ENCODE measurements at regions of chr1 and their contacts with region 1.

Region 1: DNA sequence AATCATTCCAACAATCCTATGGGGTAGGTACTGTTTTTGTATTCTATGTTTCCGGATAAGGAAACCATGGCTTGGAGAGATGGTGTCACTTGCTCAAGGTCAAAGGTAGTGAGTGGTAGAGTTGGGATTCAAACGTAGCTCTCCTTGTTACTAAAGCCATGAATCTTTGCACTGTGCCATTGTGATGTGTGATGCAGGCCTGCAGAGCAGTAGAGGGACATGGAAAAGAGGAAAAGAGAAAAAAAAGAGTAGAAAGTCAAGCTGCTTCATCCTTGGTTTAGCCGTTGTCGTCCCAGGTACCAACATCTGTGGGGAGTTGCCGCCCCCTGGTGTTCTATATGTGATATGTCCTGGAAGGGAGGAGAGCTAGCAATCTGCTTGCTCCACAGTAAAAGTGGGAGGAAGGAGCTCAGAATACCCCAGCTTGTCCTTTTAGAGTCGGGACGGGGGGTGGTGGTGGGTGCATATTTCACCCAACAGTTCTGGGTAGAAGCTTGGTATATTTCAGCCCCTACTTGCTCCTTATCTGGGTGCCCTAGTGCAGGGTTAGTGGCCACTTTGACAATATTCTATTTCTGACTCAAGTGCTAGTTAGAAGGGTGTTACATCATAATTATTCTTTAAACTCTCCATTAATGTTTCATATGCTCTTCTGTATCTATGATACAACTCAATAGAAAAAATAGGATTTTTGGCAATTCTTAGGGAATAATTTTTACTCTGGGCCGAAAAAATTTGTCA is 98.4 kb downstream of the EBNA1BP2 start:
- DNase-seq: peak; percentile 80
- H3K4me3 Mint-ChIP-seq: no peak overlapping the region
- H3K27ac Mint-ChIP-seq: no peak overlapping the region
- H3K4me1 Mint-ChIP-seq: peaks cover 4% of the 10 kb centered on the region
- H3K27me3 Mint-ChIP-seq: no peaks in the 10 kb centered on the region

Region 2: DNA sequence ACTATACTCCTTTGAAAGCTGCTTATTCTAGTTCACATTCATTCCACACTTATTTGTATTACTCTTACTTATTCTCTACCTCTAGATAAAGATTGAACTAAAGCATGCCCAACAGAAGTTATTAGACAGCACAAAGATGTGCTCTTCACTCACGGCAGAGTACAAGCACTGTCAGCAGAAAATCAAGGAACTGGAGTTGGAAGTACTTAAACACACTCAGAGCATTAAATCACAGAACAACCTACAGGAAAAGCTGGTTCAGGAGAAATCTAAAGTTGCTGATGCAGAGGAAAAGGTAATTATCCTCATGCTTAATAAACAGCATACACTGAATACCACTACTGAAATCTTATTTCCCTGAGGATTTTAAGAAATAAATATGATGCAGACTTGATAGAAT is 496.7 kb before region 1 on chr1:
- CTCF ChIA-PET with region 1: interaction called, 4 read pairs
- POLR2A ChIA-PET with region 1: no interaction called
- intact Hi-C with region 1: loop called (anchors 10 kb)
- DNase-seq: no peak
- H3K4me3 Mint-ChIP-seq: no peak overlapping the region
- H3K27ac Mint-ChIP-seq: no peak overlapping the region
- H3K4me1 Mint-ChIP-seq: no peaks in the 10 kb centered on the region
- H3K27me3 Mint-ChIP-seq: no peaks in the 10 kb centered on the region

Region 3: GRCh38 chr1:42846257-42847110 is 227.2 kb before region 1 on chr1 and contains the start of gene ZNF691:
- CTCF ChIA-PET with region 1: interaction called, 24 read pairs
- POLR2A ChIA-PET with region 1: interaction called, 4 read pairs
- intact Hi-C with region 1: no loop called
- DNase-seq: peak; percentile 94
- H3K4me3 Mint-ChIP-seq: peak within 1 kb of the TSS; percentile 89
- H3K27ac Mint-ChIP-seq: peak within 1 kb of the TSS; percentile 72
- H3K4me1 Mint-ChIP-seq: peaks cover 44% of the 10 kb centered on the region
- H3K27me3 Mint-ChIP-seq: no peaks in the 10 kb centered on the region
- total RNA-seq, gene ZNF691: 8.6 to 9.5 TPM

Region 4: DNA sequence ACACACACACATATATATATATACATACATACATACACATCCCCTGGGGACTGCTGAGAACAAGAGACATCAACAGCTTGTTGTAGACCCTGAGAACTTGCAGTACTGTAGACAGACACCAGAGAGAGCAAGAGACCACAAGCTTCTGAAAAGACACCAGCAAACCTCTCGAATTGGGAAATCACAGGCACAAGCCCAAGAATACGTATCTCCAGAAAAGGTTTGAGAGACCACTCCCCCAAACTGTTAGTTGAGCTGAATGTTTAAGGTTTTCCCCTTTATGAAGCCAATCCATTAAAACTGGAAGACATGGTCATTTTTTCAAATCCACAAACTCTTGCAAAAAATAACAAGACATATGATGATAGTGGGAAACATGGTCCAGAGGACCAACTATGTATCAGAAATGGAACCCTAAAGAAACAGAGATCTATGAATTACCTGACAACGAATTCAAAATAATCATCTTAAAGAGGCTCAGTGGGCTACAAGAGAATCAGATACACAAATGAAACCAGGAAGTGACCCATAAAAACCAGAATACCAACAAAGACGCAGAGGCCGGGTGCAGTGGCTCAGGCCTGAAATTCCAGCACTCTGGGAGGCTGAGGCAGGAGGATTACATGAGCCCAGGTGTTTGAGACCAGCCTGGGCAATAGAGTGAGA is 160.1 kb before region 1 on chr1:
- CTCF ChIA-PET with region 1: interaction called, 536 read pairs
- POLR2A ChIA-PET with region 1: interaction called, 18 read pairs
- intact Hi-C with region 1: loop called (anchors 1 kb)
- DNase-seq: peak; percentile 52
- H3K4me3 Mint-ChIP-seq: no peak overlapping the region
- H3K27ac Mint-ChIP-seq: no peak overlapping the region
- H3K4me1 Mint-ChIP-seq: peaks cover 6% of the 10 kb centered on the region
- H3K27me3 Mint-ChIP-seq: peaks cover 6% of the 10 kb centered on the region

Region 5: GRCh38 chr1:42931108-42931539 is 142.5 kb before region 1 on chr1:
- CTCF ChIA-PET with region 1: interaction called, 153 read pairs
- POLR2A ChIA-PET with region 1: no interaction called
- intact Hi-C with region 1: no loop called
- DNase-seq: peak; percentile 70
- H3K4me3 Mint-ChIP-seq: peak overlapping the region; percentile 35
- H3K27ac Mint-ChIP-seq: peak overlapping the region; percentile 98
- H3K4me1 Mint-ChIP-seq: peaks cover 61% of the 10 kb centered on the region
- H3K27me3 Mint-ChIP-seq: no peaks in the 10 kb centered on the region

Region 6: DNA sequence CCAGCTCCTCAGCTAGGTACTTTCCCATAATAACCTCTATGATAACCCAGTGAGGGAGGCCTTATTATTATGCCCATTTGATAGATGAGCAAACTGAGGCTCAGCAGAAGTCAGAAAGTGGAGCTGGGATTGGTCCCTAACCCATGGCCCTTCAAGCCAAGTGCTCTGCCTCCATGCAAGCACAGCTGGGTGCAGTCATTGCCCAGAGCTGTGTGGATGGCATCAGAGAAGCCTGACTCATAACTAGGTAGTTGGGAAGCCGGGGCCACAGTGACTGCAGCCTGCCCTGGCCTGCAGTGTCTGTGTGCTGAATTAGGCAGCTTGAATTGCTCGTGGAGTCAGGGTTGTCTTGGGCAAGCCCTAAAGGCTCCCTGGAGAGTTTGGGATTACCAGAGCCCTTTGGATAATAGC is 25.1 kb before region 1 on chr1:
- CTCF ChIA-PET with region 1: interaction called, 37 read pairs
- POLR2A ChIA-PET with region 1: no interaction called
- intact Hi-C with region 1: no loop called
- DNase-seq: no peak
- H3K4me3 Mint-ChIP-seq: no peak overlapping the region
- H3K27ac Mint-ChIP-seq: no peak overlapping the region
- H3K4me1 Mint-ChIP-seq: no peaks in the 10 kb centered on the region
- H3K27me3 Mint-ChIP-seq: no peaks in the 10 kb centered on the region

Region 7: GRCh38 chr1:43101061-43101460 is 27.4 kb after region 1 on chr1:
- CTCF ChIA-PET with region 1: no interaction called
- POLR2A ChIA-PET with region 1: no interaction called
- intact Hi-C with region 1: no loop called
- DNase-seq: no peak
- H3K4me3 Mint-ChIP-seq: no peak overlapping the region
- H3K27ac Mint-ChIP-seq: no peak overlapping the region
- H3K4me1 Mint-ChIP-seq: no peaks in the 10 kb centered on the region
- H3K27me3 Mint-ChIP-seq: no peaks in the 10 kb centered on the region

Region 8: DNA sequence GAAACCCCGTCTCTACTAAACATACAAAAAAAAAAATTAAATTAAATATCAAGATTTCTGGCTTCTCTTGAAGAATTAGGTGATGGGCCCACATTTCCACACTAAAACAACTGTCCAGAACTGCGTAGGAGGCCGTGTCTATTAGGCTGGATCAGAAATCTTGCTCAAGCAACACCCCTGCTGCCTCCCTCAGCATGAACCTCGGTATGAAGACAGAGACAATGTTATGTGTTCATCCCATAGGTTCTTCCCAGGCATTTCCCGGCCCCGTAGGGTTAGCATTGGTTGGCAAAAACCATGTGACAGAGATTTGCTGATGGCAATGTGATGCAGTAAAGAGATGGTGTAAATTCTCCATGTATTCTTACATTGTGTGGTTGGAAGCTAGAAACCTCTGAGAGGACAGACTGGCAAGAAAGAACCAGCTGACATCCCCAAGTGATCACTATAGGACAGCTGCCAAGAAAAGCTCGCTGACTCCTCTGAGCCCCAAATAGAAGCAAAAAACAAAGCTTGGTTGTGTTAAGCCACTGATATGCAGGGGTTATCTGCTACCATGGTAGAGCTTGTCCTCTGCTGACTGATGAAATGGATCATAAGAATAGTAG is 63.9 kb after region 1 on chr1:
- CTCF ChIA-PET with region 1: no interaction called
- POLR2A ChIA-PET with region 1: no interaction called
- intact Hi-C with region 1: no loop called
- DNase-seq: no peak
- H3K4me3 Mint-ChIP-seq: no peak overlapping the region
- H3K27ac Mint-ChIP-seq: no peak overlapping the region
- H3K4me1 Mint-ChIP-seq: no peaks in the 10 kb centered on the region
- H3K27me3 Mint-ChIP-seq: peaks cover 25% of the 10 kb centered on the region

Measured in activated CD4-positive, alpha-beta memory T cell treated with anti-CD3 and anti-CD28 coated beads for 36 hours (primary cell).